Breast epithelium (tissue), 4 donors: ENCODE measurements at regions of chr12 and their contacts with region 1.

Region 1: DNA sequence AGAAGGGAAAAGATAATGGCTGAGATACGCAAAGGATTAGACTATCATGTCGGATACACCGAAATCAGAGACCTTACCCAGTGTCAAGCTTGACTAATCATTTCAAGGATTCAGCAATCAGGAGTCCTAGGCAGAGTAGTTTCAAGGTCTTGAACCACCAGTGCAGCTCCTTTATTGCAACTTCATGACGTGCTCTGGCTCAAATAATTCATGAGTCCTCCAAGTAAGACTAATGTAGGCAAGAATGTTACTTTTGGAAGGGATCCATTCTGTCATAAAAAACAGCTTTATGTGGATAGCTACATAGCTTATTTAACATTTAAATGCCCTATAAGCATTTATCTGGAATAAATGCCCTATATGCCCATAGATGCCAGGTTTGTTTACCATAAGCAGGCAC is 123.2 kb downstream of the LMO3 start:
- DNase-seq: no peak
- H3K4me3 ChIP-seq: no peak overlapping the region
- H3K27ac ChIP-seq: no peak overlapping the region
- H3K4me1 ChIP-seq: no peaks in the 10 kb centered on the region
- H3K27me3 ChIP-seq: no peaks in the 10 kb centered on the region
- CTCF ChIP-seq: no peak
- POLR2A ChIP-seq: no peak

Region 2: DNA sequence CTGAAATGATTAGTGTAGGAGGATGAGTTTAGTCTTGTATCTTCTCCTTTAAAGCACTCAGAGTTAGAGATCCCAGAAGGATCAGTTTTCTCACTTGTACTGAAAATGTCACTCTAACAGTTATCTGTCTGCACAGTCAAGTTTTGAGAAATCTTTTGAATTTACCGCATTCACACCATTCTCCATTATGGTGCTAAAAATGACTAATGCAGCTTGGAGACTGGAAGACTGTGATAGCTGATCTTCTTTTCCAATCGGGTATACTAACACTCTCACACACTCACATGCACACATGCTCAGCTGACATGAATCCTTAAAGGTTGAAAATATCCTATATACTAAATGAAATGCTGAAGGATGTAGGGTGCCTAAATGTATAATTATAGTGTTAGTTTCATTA is 271.0 kb before region 1 on chr12:
- intact Hi-C with region 1: no loop called
- DNase-seq: no peak
- H3K4me3 ChIP-seq: no peak overlapping the region
- H3K27ac ChIP-seq: no peak overlapping the region
- H3K4me1 ChIP-seq: no peaks in the 10 kb centered on the region
- H3K27me3 ChIP-seq: no peaks in the 10 kb centered on the region
- CTCF ChIP-seq: no peak
- POLR2A ChIP-seq: no peak

Region 3: DNA sequence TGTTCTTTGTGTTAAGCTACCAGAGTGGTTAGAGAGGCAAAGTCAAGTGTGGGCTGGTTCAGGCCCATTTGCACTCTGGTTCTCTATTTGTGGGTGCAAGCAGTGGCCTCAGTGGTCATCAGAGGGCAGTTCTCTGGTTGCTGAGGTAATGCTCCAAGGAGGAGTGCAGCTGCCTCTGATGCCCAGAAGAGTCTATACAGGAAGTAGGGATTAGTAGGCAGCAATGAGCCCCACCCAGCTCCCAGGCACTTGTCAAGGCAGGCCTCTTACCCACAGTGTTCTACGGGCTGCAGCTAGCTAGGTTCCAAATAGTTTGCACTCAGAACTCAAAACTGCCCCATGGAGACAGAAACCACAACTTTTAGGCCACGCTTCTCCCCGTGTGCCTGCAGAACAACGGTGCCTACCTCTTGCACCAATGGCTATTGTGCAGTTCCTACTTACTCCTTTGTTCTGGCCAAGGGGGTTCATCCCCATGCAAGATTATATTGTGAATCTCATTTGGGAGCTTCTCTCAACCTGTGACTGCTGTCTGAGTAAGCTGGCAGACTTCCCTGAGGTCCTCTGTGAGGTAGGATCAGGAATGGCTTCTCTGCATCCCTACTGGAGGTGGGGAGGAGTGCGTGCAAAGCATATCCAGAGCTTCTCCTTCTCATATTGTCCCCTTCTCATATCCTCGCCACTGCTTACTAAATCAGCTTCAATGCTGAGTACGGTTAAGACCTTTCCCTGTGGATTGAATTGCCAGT is 533.6 kb after region 1 on chr12:
- intact Hi-C with region 1: loop called (anchors 5 kb)
- DNase-seq: no peak
- H3K4me3 ChIP-seq: no peak overlapping the region
- H3K27ac ChIP-seq: no peak overlapping the region
- H3K4me1 ChIP-seq: no peaks in the 10 kb centered on the region
- H3K27me3 ChIP-seq: no peaks in the 10 kb centered on the region
- CTCF ChIP-seq: no peak
- POLR2A ChIP-seq: no peak